GM10248 (cell line): ENCODE measurements at regions of chr12 and their contacts with region 1.

Region 1: GRCh38 chr12:8675591-8676036 is 13.0 kb upstream of the MFAP5 start:
- DNase-seq: no peak
- CTCF ChIP-seq: no peak

Region 2: GRCh38 chr12:8662593-8662992 is 13.0 kb before region 1 on chr12 and contains the start of gene MFAP5:
- CTCF ChIA-PET with region 1: interaction called, 20 read pairs
- POLR2A ChIA-PET with region 1: no interaction called
- DNase-seq: no peak
- CTCF ChIP-seq: no peak